ENCODE measurements at regions of chr11 and their contacts with region 1.

Region 1: GRCh38 chr11:132365650-132366049 is 995.2 kb downstream of the NTM start:
- DNase-seq: no peak
- H3K4me3 ChIP-seq: no peak overlapping the region
- H3K27ac ChIP-seq: no peak overlapping the region
- H3K4me1 ChIP-seq: no peaks in the 10 kb centered on the region
- H3K27me3 ChIP-seq: no peaks in the 10 kb centered on the region
- CTCF ChIP-seq: no peak
- EP300 ChIP-seq: no peak
- POLR2A ChIP-seq: no peak

Region 2: DNA sequence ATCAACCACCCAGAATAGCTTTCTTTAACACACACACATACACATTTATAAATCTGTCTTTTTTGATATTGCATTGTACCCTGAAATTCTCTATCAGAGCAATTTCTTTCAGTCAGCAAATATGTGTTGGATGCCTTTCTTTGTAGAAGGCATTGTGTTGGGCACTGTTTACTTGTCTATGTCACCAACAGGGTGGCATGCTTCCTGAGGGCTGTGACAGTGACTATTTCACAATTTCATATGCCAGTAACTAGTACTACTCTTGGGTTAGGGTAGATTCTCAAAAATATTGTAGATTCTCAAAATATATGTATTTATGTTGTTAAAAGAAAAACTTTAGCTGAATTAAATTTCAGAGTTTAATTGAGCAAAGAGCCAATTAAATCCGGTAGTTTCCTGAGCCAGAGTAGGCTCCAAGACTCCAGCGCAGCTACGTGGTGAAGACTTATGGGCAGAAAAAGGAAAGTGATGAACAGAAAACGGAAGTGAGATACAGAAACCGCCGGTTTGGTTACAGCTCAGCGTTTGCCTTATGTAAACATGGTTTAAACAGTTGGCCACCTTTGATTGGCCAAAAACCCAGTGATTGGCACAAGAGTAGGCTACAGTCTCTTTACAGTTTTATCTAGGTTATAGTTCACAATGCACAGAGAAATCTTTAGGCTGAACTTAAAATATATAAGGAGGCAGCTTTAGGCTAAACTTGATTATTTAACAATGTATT is 272.0 kb before region 1 on chr11:
- intact Hi-C with region 1: loop called in 1 of 4 experiments (anchors 5 kb)
- DNase-seq: no peak
- H3K4me3 ChIP-seq: no peak overlapping the region
- H3K27ac ChIP-seq: no peak overlapping the region
- H3K4me1 ChIP-seq: no peaks in the 10 kb centered on the region
- H3K27me3 ChIP-seq: no peaks in the 10 kb centered on the region
- CTCF ChIP-seq: no peak
- EP300 ChIP-seq: no peak
- POLR2A ChIP-seq: no peak

Region 3: DNA sequence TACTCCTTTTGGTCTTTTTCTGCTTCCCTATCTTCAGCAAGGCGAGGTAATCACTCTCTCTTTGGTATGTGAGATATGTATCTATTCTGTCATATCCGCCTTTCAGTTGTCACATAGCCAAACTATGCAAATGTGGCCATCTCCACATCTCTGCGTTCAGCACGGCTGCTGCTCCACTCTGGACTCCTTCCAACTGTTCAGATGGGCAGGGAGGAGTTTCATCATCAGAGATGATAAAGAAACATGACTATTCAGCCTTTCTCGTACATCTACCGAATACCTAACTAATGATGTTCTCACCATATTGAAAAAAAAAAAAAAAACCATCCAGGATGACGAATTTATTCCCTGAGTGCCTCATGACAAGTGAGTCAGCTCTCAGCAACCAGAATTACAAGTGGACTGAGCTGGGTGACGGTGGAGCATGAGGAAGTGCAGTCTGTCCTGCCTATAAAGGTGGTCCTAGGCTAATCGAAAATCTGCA is 267.0 kb after region 1 on chr11:
- intact Hi-C with region 1: no loop called
- DNase-seq: no peak
- H3K4me3 ChIP-seq: no peak overlapping the region
- H3K27ac ChIP-seq: no peak overlapping the region
- H3K4me1 ChIP-seq: no peaks in the 10 kb centered on the region
- H3K27me3 ChIP-seq: no peaks in the 10 kb centered on the region
- CTCF ChIP-seq: no peak
- EP300 ChIP-seq: no peak
- POLR2A ChIP-seq: no peak

Region 4: DNA sequence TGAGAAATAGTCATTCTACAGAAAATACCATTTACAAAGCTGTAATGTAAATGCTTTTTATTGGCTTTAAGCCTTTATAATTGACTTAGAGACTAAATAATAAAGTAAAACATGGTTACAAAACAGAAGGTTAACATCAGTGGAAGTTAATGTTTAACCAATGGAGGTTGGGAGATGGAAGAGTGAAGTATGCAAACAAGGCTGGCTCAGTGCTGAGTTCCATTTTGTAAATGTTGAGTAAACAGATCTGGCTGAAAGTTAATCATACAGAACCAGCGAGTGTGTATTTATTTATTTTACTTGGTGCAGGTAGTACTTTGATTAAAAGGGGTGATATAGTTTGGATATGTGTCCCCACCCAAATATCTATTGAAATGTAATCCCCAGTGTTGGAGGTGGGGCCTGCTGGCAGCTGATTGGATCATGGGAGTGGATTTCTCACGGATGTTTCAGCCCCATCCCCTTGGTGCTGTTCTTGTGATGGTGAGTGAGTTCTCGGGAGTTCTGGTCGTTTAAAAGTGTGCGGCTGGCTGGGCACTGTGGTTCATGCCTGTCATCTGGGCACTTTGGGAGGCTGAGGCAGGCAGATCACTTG is 339.2 kb after region 1 on chr11:
- intact Hi-C with region 1: no loop called
- DNase-seq: no peak
- H3K4me3 ChIP-seq: no peak overlapping the region
- H3K27ac ChIP-seq: no peak overlapping the region
- H3K4me1 ChIP-seq: no peaks in the 10 kb centered on the region
- H3K27me3 ChIP-seq: no peaks in the 10 kb centered on the region
- CTCF ChIP-seq: no peak
- EP300 ChIP-seq: no peak
- POLR2A ChIP-seq: no peak

Measured in ovary (tissue), 10 donors.